ENCODE measurements at regions of chr2 and their contacts with region 1.

Region 1: DNA sequence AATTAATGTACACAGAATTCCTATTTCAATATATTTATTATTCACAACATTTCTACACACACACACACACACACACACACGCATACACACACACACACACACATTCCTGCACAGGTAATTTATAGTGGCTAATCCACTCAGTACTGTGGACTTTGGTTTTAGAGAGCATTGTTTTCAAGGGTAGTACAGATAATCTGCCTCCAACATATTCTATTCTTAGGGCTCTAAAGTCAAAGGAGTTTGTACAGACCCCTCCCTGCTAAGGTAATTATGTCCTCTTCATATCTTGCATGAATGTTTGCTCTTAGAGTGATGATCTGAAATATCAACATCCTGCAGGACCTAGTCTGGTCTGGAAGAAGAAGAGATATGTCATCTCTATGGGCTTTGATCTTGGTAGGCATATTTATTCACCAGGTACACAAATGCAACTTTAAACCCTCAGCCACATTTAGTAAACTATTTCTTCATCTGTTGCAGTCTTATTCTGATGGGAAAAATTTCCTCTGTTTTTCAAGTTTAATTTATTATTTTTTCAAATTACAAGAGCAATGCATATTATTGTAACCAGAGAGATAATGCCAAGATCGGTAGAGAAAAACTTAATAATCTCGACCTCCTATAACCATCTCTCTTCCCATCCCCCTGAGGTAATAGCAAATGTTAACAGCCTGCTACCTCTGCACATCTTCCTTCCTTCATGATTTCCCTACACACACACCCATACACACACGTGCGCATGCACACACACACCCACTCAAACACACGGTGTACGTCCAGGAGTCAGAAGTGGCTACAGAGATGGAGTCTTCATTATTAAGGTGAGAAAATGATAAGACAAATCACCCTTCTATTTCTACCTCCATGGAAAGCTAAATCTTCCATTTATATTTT is 18.3 kb upstream of the POLE4 start:
- DNase-seq: peak; percentile 100
- ATAC-seq: peak; percentile 93
- H3K4me3 ChIP-seq: peak overlapping the region in 2 of 3 experiments; percentile 9 to 29; a peak in 1 of 6 replicates
- H3K27ac ChIP-seq: peak overlapping the region; percentile 81
- H3K4me1 ChIP-seq: peaks cover 76% of the 10 kb centered on the region
- H3K27me3 ChIP-seq: no peaks in the 10 kb centered on the region
- CTCF ChIP-seq: no peak
- EP300 ChIP-seq: peak; percentile 40 to 98; a peak in 3 of 4 replicates
- POLR2A ChIP-seq: no peak
- RAD21 ChIP-seq: no peak; the same call in 1 of the 2 replicates

Region 2: GRCh38 chr2:74816540-74817303 is 123.4 kb before region 1 on chr2:
- CTCF ChIA-PET with region 1: no interaction called
- POLR2A ChIA-PET with region 1: no interaction called
- in situ Hi-C with region 1: no loop called
- intact Hi-C with region 1: no loop called
- DNase-seq: peak; percentile 92
- ATAC-seq: peak; percentile 96
- H3K4me3 ChIP-seq: peak overlapping the region; percentile 25 to 61 (median 43)
- H3K27ac ChIP-seq: peak overlapping the region; percentile 63
- H3K4me1 ChIP-seq: peaks cover 84% of the 10 kb centered on the region
- H3K27me3 ChIP-seq: 0 out of 5 replicates have a peak, but pooled peaks cover 0 to 4% of the 10 kb centered on the region in 2 experiments
- CTCF ChIP-seq: no peak
- EP300 ChIP-seq: peak in 1 of 2 experiments; percentile 76; a peak in 2 of 4 replicates
- POLR2A ChIP-seq: no peak; a peak in 1 of 4 replicates
- RAD21 ChIP-seq: 0 out of 2 replicates have a peak, but pooled peaks have one; percentile 27

Region 3: GRCh38 chr2:74958274-74959105 is 18.3 kb after region 1 on chr2 and contains the start of gene POLE4:
- CTCF ChIA-PET with region 1: no interaction called
- POLR2A ChIA-PET with region 1: interaction called, 4 read pairs
- in situ Hi-C with region 1: no loop called
- intact Hi-C with region 1: loop called (anchors 2 kb)
- DNase-seq: peak; percentile 86
- ATAC-seq: peak; percentile 95
- H3K4me3 ChIP-seq: peak within 1 kb of the TSS; percentile 59 to 84 (median 67)
- H3K27ac ChIP-seq: peak within 1 kb of the TSS; percentile 92
- H3K4me1 ChIP-seq: peaks cover 72% of the 10 kb centered on the region
- H3K27me3 ChIP-seq: no peaks in the 10 kb centered on the region
- CTCF ChIP-seq: peak; percentile 48
- EP300 ChIP-seq: 0 out of 4 replicates have a peak, but pooled peaks of 1 of the 2 experiments have one; percentile 1
- POLR2A ChIP-seq: peak; percentile 96 to 97
- RAD21 ChIP-seq: peak; percentile 86
- total RNA-seq, gene POLE4: 106 and 143 TPM in 2 replicates